ENCODE measurements at regions of chrX and their contacts with region 1.

Region 1: GRCh38 chrX:153971450-153972367 is at the start of gene HCFC1:
- DNase-seq: peak; percentile 96
- ATAC-seq: peak; percentile 78
- total RNA-seq, gene HCFC1: 25.4 TPM

Region 2: GRCh38 chrX:153649178-153649914 is 322.4 kb before region 1 on chrX:
- intact Hi-C with region 1: no loop called
- DNase-seq: peak; percentile 21
- ATAC-seq: no peak

Region 3: GRCh38 chrX:153924149-153924861 is 47.4 kb before region 1 on chrX:
- intact Hi-C with region 1: no loop called
- DNase-seq: no peak
- ATAC-seq: no peak

Region 4: DNA sequence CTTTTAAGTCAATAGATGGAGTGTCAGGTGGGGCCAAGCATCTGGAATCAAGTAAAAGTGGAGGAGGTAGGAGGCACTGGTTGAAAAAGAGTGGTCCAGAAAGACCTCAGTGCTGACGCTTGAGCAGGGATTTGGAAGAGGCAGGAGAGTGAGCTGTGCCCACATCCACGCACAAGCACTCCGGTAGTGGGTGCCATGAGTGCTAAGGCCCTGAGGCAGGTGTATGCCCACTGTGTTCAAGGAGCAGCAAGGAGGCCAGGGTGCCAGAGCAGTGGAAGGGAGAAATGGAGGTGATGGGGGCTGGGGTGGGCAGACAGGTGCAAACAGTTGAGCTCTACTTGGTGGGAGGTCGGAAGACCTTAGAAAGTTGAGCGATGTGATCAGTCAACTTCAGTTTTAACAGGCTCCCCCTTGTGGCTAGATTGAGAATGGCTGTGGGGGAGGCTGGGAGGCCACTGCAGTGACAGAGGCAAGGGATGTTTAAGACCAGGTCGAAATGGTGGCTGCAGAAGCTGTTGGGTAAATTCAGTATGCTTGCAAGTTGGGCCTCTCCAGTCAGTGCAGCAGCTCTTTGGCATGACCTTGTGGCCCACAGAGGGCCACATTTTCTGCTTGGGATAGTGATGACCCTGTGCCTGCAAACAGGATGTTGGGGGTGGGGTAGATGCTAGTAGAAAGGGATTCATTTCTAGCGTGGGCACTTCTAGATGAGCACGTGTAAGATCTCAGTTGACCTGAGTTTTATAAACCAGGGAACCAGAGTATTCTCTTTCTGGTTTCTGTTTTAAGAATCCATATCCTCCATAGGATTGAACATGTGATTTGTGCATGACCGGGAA is 336.6 kb after region 1 on chrX:
- intact Hi-C with region 1: no loop called
- DNase-seq: peak; percentile 73
- ATAC-seq: peak; percentile 39

Region 5: GRCh38 chrX:154378782-154379591 is 407.3 kb after region 1 on chrX and contains the start of gene EMD:
- intact Hi-C with region 1: loop called (anchors 10 kb)
- DNase-seq: peak; percentile 98
- ATAC-seq: peak; percentile 94
- total RNA-seq, gene EMD: 51.1 TPM